ENCODE measurements at regions of chr3 and their contacts with region 1.

Region 1: GRCh38 chr3:73563896-73564582 is 60.7 kb downstream of the PDZRN3 start:
- DNase-seq: no peak
- H3K4me3 ChIP-seq: no peak overlapping the region
- H3K27ac ChIP-seq: peak overlapping the region; percentile 57 to 60
- H3K4me1 ChIP-seq: peaks cover 6 to 23% of the 10 kb centered on the region in 2 donors
- H3K27me3 ChIP-seq: no peaks in the 10 kb centered on the region
- CTCF ChIP-seq: no peak

Region 2: DNA sequence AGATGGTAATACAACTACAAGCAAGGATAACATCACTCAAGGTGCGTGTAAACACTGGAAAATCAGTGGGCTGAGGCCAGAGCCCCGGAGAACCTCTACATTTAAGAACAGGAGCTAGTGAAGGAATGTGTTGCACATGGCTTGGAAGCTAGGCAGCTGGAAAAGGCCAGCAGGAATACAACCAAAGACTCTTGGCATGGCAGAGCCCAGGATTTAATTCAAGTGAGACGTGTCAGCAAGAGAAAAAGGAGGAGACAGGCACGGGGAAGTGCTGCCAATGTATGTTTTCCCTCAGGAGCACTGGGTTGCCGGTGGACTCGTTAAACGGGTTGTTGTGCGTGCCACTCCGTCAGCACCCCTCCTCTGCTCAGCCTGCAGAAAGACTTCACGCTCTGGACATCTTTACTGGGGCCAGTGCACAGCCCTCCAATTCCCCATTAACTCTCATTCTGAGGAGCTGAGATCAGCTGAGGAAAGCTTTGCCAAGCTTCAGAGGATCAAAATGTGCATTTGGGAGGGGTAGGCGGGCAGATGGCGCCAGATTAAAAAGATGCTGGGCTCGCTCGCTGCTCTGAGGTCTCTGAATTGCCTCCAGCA is 43.1 kb before region 1 on chr3:
- intact Hi-C with region 1: loop called (anchors 5 kb)
- DNase-seq: peak in 1 of 2 donors; percentile 80
- H3K4me3 ChIP-seq: peak overlapping the region in 1 of 2 donors; percentile 47
- H3K27ac ChIP-seq: peak overlapping the region; percentile 84 to 89
- H3K4me1 ChIP-seq: peaks cover 4 to 59% of the 10 kb centered on the region in 2 donors
- H3K27me3 ChIP-seq: no peaks in the 10 kb centered on the region
- CTCF ChIP-seq: no peak

Region 3: GRCh38 chr3:73759297-73759711 is 195.3 kb after region 1 on chr3:
- intact Hi-C with region 1: no loop called
- DNase-seq: no peak
- H3K4me3 ChIP-seq: peak overlapping the region in 1 of 2 donors; percentile 15
- H3K27ac ChIP-seq: peak overlapping the region; percentile 11 to 53
- H3K4me1 ChIP-seq: peaks cover 0 to 11% of the 10 kb centered on the region in 2 donors
- H3K27me3 ChIP-seq: no peaks in the 10 kb centered on the region
- CTCF ChIP-seq: no peak